Ascending aorta (tissue), 2 donors: ENCODE measurements at regions of chr4 and their contacts with region 1.

Region 1: DNA sequence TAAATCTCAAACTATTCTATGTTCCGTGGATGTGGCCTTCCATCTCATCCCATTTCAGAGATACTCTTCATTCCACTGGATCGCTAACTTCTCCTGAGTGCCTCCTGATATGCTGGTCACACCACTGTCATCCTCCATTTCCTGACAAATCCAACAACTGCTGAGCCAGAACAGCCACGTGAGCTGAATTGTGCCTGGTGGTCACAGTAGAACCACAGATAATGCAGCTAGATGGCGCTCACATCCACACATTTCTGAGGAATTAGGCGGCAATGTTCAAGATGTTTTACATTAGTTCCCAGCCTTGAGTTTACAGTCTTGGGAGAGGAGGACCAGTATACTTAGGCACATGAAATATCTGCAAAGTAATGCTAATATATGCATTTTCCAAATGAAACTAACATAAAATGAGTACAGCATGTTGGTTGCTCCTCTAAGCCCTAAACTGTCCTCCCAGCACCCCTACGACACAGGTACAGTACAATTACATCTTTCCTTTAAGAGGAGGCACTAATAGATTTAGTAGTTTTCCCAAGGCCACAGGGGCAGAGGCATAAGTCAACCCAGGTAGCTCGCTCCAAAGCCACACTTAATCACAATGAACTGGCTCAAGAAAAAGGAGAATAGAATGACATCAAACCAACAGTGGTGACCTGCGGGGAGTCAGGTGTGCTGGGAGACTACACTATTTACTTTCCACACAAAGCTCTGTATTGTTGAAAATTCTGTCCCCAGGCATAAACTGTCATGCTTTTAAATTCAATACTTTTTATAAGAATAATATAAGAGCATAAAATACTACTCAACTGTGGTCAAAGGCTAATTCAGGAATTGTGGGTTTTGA is 134.2 kb downstream of the CHIC2 start:
- DNase-seq: peak; percentile 23 to 90
- H3K4me3 ChIP-seq: no peak overlapping the region
- H3K27ac ChIP-seq: no peak overlapping the region
- H3K4me1 ChIP-seq: peaks cover 0 to 11% of the 10 kb centered on the region in 2 donors
- H3K27me3 ChIP-seq: no peaks in the 10 kb centered on the region
- CTCF ChIP-seq: peak; percentile 62 to 86 (median 62)

Region 2: GRCh38 chr4:53914313-53915016 is 15.7 kb before region 1 on chr4:
- intact Hi-C with region 1: loop called (anchors 2 kb)
- DNase-seq: no peak
- H3K4me3 ChIP-seq: no peak overlapping the region
- H3K27ac ChIP-seq: no peak overlapping the region
- H3K4me1 ChIP-seq: no peaks in the 10 kb centered on the region
- H3K27me3 ChIP-seq: no peaks in the 10 kb centered on the region
- CTCF ChIP-seq: no peak

Region 3: DNA sequence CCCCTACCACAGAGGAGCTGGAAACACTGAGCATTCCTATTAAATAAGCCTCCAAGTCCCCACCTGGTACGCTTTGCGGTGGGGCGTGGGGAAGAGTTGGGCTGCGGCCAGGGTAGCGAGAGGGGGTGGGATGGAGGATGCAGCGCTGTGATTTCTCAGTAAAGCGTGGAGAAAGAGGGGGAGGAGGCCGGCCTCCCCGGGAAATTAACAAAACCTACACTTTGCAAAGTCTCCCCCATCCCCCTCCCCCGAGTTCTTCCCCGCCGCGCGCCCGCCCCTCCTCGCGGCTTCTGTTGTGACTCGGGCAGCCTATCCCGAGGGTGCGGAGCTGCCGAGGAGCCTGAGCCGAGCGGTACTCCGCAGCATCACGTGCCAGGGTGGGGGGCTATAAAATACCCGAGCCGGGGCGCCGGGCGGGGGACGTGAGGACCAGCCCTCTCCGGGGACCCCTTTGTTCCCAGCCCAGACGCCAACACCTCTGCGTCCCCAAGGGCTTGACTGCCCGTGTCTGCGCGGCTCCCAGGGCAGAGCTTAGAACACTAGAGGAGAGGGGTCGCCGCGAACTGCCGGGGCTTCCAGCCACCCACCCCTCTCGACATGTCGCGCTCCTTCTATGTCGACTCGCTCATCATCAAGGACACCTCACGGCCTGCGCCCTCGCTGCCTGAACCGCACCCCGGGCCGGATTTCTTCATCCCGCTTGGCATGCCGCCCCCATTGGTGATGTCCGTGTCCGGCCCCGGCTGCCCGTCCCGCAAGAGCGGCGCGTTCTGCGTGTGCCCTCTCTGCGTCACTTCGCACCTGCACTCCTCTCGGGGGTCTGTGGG is 169.8 kb after region 1 on chr4 and contains the start of gene GSX2:
- intact Hi-C with region 1: loop called (anchors 5 kb)
- DNase-seq: no peak
- H3K4me3 ChIP-seq: peak within 1 kb of the TSS; percentile 50 to 61
- H3K27ac ChIP-seq: no peak within 1 kb of the TSS
- H3K4me1 ChIP-seq: peaks cover 9 to 25% of the 10 kb centered on the region in 2 donors
- H3K27me3 ChIP-seq: peaks cover 14% of the 10 kb centered on the region
- CTCF ChIP-seq: no peak
- total RNA-seq, gene GSX2: not detected

Region 4: GRCh38 chr4:54217642-54218495 is 287.7 kb after region 1 on chr4:
- intact Hi-C with region 1: loop called (anchors 1 kb)
- DNase-seq: peak in 1 of 2 donors; percentile 90
- H3K4me3 ChIP-seq: peak overlapping the region; percentile 51 to 63
- H3K27ac ChIP-seq: peak overlapping the region in 1 of 2 donors; percentile 39
- H3K4me1 ChIP-seq: peaks cover 0 to 3% of the 10 kb centered on the region in 2 donors
- H3K27me3 ChIP-seq: no peaks in the 10 kb centered on the region
- CTCF ChIP-seq: peak; percentile 83 to 95 (median 92)